Astrocyte of the cerebellum (primary cell): ENCODE measurements at regions of chr3 and their contacts with region 1.

Region 1: DNA sequence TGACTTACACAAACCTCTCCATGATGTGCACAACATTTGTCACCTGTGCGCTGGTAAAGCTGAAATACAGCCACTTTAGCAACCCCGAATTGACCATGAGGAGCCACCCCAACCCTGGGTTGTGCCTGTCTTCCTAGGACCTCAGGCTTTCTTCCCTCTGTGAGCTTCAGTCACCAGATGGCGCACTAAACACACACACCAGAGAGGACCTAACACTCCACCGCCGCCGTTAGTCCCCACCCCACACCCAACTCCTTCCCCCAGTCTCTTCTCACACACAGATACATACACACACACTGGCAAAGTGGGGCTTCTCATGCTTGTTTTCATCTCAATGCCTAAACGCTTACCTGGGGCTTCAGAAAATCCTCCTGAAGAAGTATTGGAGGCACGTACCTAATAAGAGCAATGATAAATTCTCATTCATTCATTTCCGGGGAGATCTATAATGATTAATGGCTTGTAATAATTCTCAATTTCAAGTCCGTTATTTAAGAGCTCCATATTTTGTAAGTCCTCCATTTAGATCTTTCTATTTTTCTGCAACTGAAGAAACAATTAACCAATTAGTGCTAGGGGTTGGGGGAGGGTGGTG is 2.1 kb upstream of the CCDC80 start:
- DNase-seq: peak; percentile 86
- H3K4me3 ChIP-seq: no peak overlapping the region
- CTCF ChIP-seq: peak; percentile 91

Region 2: DNA sequence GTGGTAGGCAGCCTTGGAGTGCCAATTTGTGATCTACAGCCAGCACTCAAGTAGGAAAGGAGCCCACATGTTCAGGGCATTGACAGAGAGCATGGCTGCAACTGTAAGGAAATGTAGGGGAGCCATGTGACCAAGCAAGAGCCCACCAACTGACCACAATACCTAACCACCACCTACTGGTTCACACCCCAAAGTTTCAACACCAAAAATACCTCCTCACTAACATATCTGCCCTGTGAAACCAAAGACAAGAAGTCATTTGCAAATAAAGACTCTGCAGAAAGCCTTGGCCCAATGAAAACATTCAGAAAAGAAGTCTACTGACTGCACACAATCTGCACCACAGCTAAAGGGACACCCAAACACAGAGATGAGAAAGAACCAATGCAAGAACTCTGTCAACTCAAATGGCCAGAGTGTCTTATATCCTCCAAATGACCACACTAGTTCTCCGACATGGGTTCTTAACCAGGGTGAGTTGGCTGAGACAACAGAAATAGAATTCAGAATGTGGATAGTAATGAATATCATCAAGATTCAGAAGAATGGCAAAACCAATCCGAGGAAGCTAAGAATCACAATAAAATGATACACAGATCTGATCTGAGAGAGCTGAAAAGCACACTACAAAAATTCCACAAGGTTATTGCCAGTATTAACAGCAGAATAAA is 389.6 kb before region 1 on chr3:
- in situ Hi-C with region 1: no loop called
- DNase-seq: no peak
- H3K4me3 ChIP-seq: no peak overlapping the region
- CTCF ChIP-seq: no peak

Region 3: GRCh38 chr3:112561731-112562688 is 81.0 kb before region 1 on chr3 and contains the starts of genes ATG3 and SLC35A5:
- in situ Hi-C with region 1: no loop called
- DNase-seq: peak; percentile 93
- H3K4me3 ChIP-seq: peak within 1 kb of the TSS; percentile 95
- CTCF ChIP-seq: no peak

Region 4: DNA sequence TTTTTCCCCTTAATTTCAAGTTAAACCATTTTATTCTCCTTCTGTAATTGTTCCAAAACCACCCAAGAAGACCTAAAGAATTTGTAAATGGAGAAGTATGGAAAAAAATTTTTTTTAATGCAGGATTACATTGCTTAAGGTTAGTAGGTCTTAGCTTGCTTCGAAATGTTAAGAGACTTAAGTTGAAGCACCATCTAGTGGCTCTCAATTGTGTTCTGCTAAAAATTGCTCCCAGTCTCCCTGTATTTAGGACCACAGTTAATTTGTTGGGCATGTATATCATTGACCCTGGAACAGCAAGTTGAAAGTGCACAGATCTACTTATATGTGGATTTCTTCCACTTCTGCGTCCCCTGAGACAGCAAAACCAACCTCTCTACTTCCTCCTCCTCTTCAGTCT is 171.3 kb after region 1 on chr3:
- in situ Hi-C with region 1: loop called (anchors 25 kb)
- DNase-seq: peak; percentile 62
- H3K4me3 ChIP-seq: no peak overlapping the region
- CTCF ChIP-seq: peak; percentile 58

Region 5: GRCh38 chr3:112990672-112991602 is 347.9 kb after region 1 on chr3 and contains the start of gene GTPBP8:
- in situ Hi-C with region 1: loop called (anchors 25 kb)
- DNase-seq: peak; percentile 73
- H3K4me3 ChIP-seq: peak within 1 kb of the TSS; percentile 83
- CTCF ChIP-seq: no peak